Activated CD4-positive, alpha-beta T cell treated with anti-CD3 and anti-CD28 coated beads, Interleukin-2, amount 10 ng/mL, durations not matched to agents 24 days and 14 days (primary cell): ENCODE measurements at regions of chr1 and their contacts with region 1.

Region 1: DNA sequence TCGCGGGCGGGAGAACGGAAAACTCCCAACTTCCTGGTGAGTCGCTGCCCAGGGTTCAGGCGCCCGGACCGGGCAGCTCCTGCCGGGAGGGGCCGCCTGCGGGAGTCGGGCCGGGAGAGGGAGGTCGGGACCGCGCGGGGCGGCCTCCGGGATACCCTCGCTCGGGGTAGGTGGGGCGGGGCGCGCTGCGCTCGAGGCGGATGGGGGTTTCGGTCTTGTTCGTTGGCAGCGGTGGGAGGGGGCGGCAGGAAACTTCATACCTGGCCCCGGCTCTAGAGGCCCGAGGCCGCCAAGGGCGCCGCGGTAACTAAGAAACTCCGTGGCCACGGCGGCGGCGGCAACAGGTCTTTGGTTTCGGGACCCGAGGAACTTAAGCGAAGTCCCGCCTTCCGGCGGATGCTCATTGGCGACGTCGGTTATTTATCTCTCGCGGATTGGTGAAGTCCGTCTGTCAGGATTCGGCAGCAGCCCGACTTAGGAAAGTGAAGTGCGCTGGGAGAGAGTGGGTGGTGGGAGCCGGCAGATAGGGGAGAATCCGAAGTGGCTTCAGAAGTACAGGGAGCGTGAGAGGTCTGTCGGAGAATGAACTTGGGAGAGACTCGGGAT is 546 bp downstream of the NEK7 start:
- DNase-seq: peak; percentile 95
- H3K4me3 Mint-ChIP-seq: peak overlapping the region; percentile 97
- H3K27ac Mint-ChIP-seq: peak overlapping the region; percentile 95
- H3K4me1 Mint-ChIP-seq: peaks cover 22% of the 10 kb centered on the region
- H3K27me3 Mint-ChIP-seq: no peaks in the 10 kb centered on the region

Region 2: GRCh38 chr1:197146197-197146889 is 1011.0 kb before region 1 on chr1 and contains the start of gene ASPM:
- intact Hi-C with region 1: loop called (anchors 5 kb)
- DNase-seq: peak; percentile 98
- H3K4me3 Mint-ChIP-seq: peak within 1 kb of the TSS; percentile 96
- H3K27ac Mint-ChIP-seq: peak within 1 kb of the TSS; percentile 95
- H3K4me1 Mint-ChIP-seq: peaks cover 30% of the 10 kb centered on the region
- H3K27me3 Mint-ChIP-seq: no peaks in the 10 kb centered on the region
- total RNA-seq, gene ASPM: 29.1 TPM in 2 replicates

Region 3: DNA sequence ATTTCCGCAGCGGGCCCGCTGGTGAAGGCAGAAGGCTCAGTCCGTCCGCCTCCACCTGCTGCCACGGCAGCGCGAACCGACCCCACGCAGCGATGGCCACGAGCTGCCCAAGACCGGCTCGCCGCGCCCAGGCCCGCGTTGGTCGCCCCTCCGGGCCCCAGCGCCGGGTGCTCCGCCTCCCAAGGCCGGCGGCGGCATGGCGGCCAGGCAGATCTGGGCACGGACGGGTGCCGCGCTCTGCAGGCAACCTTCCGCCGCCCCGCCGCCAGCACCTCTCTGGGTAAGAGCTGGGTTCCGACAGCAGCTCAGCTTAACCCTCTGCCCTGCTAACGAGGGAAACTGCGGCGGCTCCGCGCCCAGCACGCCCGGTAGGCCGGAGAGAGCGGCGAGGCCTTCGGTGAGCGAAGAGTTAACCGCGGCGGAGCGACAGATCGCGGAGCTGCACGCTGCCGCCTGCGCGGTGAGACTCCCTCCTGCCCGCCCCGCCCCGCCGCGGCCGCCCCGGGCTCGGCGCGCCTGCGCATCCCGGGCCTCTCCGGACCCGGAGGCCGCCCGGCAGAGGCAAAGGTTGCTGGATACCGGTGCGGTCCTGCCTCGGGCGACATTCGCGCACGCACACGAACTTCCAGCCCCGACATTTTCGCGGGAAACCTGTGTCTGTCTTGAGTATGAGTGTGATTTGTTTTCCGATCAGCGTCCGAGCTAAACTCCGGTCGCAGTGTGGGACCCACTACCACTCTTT is 254.7 kb before region 1 on chr1 and contains the start of gene C1orf53:
- intact Hi-C with region 1: loop called (anchors 2 kb)
- DNase-seq: peak; percentile 94
- H3K4me3 Mint-ChIP-seq: peak within 1 kb of the TSS; percentile 83
- H3K27ac Mint-ChIP-seq: peak within 1 kb of the TSS; percentile 80
- H3K4me1 Mint-ChIP-seq: peaks cover 8% of the 10 kb centered on the region
- H3K27me3 Mint-ChIP-seq: peaks cover 68% of the 10 kb centered on the region
- total RNA-seq, gene C1orf53: 1.0 and 1.3 TPM in 2 replicates

Region 4: GRCh38 chr1:198175423-198176170 is 18.3 kb after region 1 on chr1:
- intact Hi-C with region 1: loop called (anchors 2 kb)
- DNase-seq: peak; percentile 71
- H3K4me3 Mint-ChIP-seq: peak overlapping the region; percentile 45
- H3K27ac Mint-ChIP-seq: peak overlapping the region; percentile 23
- H3K4me1 Mint-ChIP-seq: peaks cover 69% of the 10 kb centered on the region
- H3K27me3 Mint-ChIP-seq: no peaks in the 10 kb centered on the region

Region 5: DNA sequence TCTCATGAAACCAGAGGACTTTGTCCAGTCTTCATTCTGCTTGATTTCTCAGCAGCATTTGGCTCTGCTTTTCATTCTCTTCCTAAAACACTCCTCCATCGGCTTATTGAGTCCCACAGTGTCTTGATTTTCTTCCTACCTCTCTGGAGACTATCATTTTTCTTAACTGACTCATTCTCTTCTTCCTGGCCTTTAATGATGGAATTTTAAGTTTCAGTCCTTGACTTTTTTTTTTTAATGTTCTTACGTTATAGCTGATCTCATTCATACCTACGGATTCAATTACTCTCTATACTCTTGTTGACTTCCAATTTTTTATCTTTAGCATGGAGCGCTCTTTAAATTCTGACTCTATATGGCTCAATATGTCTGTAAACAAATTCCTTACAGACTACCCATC is 110.6 kb after region 1 on chr1:
- intact Hi-C with region 1: no loop called
- DNase-seq: no peak
- H3K4me3 Mint-ChIP-seq: no peak overlapping the region
- H3K27ac Mint-ChIP-seq: no peak overlapping the region
- H3K4me1 Mint-ChIP-seq: peaks cover 9% of the 10 kb centered on the region
- H3K27me3 Mint-ChIP-seq: no peaks in the 10 kb centered on the region

Region 6: GRCh38 chr1:198352975-198353695 is 195.8 kb after region 1 on chr1:
- intact Hi-C with region 1: loop called (anchors 5 kb)
- DNase-seq: no peak
- H3K4me3 Mint-ChIP-seq: no peak overlapping the region
- H3K27ac Mint-ChIP-seq: no peak overlapping the region
- H3K4me1 Mint-ChIP-seq: no peaks in the 10 kb centered on the region
- H3K27me3 Mint-ChIP-seq: peaks cover 9% of the 10 kb centered on the region

Region 7: DNA sequence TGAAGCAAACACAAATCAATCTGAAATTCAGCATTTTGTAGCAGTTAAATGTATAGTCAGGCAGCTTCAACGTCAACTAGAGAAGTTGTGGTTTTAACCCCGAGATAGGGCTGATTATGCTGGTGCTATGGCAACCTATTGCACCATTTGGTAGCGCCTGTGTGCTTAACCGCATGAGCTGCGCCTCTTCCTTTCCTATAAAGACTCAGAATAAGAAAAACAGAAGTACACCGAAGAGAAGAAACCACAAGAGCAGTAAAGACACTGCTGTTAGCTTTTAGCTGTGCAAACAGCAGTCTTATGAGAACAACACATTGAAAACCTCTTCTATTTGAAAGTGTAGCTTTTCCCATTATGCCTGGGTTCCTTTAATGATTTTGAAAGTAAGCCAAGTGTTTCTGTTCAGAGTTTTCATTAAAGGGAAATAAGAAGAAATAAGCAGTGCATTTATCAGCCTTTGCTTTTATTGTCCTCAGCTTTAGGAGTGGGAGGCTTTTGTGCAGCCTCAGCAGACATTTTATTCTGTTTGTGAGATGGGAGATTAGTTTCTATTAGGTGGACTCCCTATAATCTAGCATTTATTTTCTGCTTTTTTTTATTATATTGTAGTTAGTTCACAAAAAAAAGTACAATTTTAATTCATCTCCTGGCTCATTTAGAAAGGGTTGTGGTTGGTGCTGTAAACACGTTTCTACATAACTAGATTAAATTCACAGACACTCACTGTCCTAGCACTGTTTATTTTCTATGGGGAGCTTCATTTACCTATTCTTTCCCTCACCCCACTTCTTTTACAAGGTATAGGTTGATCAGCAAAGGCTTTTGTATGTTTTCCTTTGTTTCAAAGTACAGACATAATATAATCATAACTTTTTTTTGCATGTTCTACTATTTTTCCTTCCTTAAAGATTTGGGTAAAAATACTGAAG is 524.8 kb after region 1 on chr1:
- intact Hi-C with region 1: loop called (anchors 2 kb)
- DNase-seq: peak; percentile 95
- H3K4me3 Mint-ChIP-seq: peak overlapping the region; percentile 75
- H3K27ac Mint-ChIP-seq: peak overlapping the region; percentile 91
- H3K4me1 Mint-ChIP-seq: peaks cover 71% of the 10 kb centered on the region
- H3K27me3 Mint-ChIP-seq: no peaks in the 10 kb centered on the region